ENCODE measurements at regions of chr16 and their contacts with region 1.

Region 1: GRCh38 chr16:28317040-28317880 is 24.9 kb downstream of the SBK1 start:
- DNase-seq: no peak
- H3K4me3 ChIP-seq: no peak overlapping the region
- H3K27ac ChIP-seq: no peak overlapping the region
- H3K4me1 ChIP-seq: peaks cover 0 to 3% (median 0%) of the 10 kb centered on the region in 4 donors
- H3K27me3 ChIP-seq: no peaks in the 10 kb centered on the region
- CTCF ChIP-seq: peak in 3 of 4 experiments; percentile 50 to 88 (median 55)
- EP300 ChIP-seq: no peak
- POLR2A ChIP-seq: no peak

Region 2: GRCh38 chr16:28241924-28242323 is 75.3 kb before region 1 on chr16:
- intact Hi-C with region 1: no loop called
- DNase-seq: no peak
- H3K4me3 ChIP-seq: no peak overlapping the region
- H3K27ac ChIP-seq: no peak overlapping the region
- H3K4me1 ChIP-seq: no peaks in the 10 kb centered on the region
- H3K27me3 ChIP-seq: no peaks in the 10 kb centered on the region
- CTCF ChIP-seq: no peak
- EP300 ChIP-seq: no peak
- POLR2A ChIP-seq: no peak

Region 3: GRCh38 chr16:28277537-28278388 is 39.5 kb before region 1 on chr16:
- intact Hi-C with region 1: loop called (anchors 1 kb)
- DNase-seq: peak; percentile 92
- H3K4me3 ChIP-seq: peak overlapping the region; percentile 2 to 47 (median 33)
- H3K27ac ChIP-seq: peak overlapping the region in 1 of 4 donors; percentile 11
- H3K4me1 ChIP-seq: peaks cover 0 to 10% (median 7%) of the 10 kb centered on the region in 4 donors
- H3K27me3 ChIP-seq: peaks cover 0 to 31% (median 14%) of the 10 kb centered on the region in 3 donors
- CTCF ChIP-seq: peak; percentile 89 to 94 (median 92)
- EP300 ChIP-seq: no peak
- POLR2A ChIP-seq: no peak

Measured in sigmoid colon (tissue), 7 donors.